ENCODE measurements at regions of chr1 and their contacts with region 1.

Region 1: GRCh38 chr1:40153073-40153770 is 8.0 kb upstream of the RLF start:
- H3K4me3 ChIP-seq: no peak overlapping the region
- H3K27ac ChIP-seq: no peak overlapping the region
- H3K4me1 ChIP-seq: no peaks in the 10 kb centered on the region
- CTCF ChIP-seq: peak; percentile 22; the same call in 1 of the 2 replicates

Region 2: DNA sequence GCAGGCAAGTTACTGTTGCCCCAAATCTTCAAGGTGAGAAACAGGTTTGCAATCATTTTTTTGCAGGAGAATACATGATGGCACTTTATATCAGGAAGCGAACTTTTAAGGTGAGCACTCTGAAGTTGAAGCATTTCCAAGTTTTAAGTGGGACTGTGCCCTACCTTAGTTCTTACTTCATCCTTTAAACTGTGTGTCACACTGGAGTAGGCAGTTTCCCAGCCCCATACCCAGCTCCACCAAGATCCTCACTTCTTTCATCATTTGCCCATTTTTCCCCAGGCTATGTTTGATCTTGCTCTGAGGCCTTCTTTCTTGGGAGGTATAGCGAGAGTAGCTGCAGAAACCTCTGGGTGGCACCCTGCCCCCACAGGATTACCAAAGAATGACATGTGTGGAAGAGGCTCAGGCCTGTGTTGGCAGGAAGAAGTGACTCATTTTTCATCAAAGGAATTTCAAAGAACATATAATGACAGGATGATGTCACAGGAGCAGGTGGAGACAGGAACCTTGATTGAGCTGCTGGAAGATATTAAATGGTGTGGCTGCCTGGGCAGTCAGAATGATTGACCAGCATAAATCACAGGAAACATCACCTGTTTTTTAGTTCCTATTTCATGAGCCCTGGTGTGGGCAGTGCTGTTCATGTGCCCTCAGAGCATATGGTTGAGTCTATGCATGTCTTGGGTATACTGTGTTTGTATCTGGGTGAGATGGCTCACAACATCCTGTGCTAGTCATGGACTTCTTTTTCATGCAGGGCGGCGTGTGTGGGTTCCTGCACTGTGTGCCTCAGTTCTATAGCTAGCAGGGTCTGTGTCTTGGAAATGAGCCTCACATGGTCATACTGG is 969.5 kb before region 1 on chr1:
- CTCF ChIA-PET with region 1: no interaction called
- POLR2A ChIA-PET with region 1: no interaction called
- H3K4me3 ChIP-seq: no peak overlapping the region
- H3K27ac ChIP-seq: peak overlapping the region; percentile 1; the same call in 1 of the 2 replicates
- H3K4me1 ChIP-seq: peaks cover 18% of the 10 kb centered on the region
- CTCF ChIP-seq: peak; percentile 75

Region 3: DNA sequence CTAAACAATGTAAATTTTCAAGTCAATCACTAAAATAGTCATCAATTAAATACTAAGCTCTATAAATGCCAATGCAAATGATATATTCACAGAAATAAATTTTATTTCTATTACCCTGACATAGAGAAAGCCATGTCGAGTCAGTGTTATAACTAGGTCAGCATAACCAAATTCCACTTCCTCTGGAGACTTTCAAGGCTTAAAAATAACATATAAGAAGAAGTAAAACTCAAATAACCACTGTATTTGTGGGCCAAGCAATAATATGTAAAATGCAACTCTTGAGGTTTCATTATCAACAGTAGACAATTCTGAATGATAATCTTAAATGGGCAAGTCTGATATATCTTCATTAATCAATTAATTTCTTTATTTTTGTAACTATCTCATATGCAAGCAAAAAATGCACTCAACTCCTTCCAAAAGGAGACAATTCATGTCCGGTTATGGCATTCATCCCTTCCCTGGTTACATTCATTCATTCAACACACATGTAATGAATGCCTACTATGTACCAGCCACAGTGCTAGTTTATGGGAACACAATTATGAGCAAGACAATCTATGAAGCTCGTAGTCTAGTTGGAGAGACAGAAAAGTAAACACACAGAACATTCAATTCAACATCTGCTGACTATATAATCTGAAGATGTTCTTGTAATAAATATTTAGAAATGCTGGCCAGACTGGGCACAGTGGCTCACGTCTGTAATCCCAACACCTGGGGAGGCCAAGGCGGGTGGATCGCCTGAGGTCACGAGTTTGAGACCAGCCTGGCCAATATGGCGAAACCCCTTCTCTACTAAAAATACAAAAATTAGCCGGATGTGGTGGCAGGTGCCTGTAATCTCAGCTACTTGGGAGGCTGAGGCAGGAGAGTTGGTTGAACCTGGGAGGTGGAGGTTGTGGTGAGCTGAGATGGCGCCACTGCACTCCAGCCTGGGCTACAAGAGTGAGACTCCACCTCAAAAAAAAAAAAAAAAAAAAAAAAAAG is 149.8 kb before region 1 on chr1:
- CTCF ChIA-PET with region 1: no interaction called
- POLR2A ChIA-PET with region 1: no interaction called
- H3K4me3 ChIP-seq: no peak overlapping the region
- H3K27ac ChIP-seq: no peak overlapping the region
- H3K4me1 ChIP-seq: no peaks in the 10 kb centered on the region
- CTCF ChIP-seq: no peak

Region 4: GRCh38 chr1:40078512-40079333 is 74.5 kb before region 1 on chr1:
- CTCF ChIA-PET with region 1: interaction called, 21 read pairs
- POLR2A ChIA-PET with region 1: no interaction called
- H3K4me3 ChIP-seq: no peak overlapping the region
- H3K27ac ChIP-seq: no peak overlapping the region
- H3K4me1 ChIP-seq: no peaks in the 10 kb centered on the region
- CTCF ChIP-seq: peak; percentile 17; the same call in 1 of the 2 replicates

Region 5: GRCh38 chr1:40185951-40186864 is 33.0 kb after region 1 on chr1:
- CTCF ChIA-PET with region 1: interaction called, 49 read pairs
- POLR2A ChIA-PET with region 1: no interaction called
- H3K4me3 ChIP-seq: no peak overlapping the region
- H3K27ac ChIP-seq: no peak overlapping the region
- H3K4me1 ChIP-seq: no peaks in the 10 kb centered on the region
- CTCF ChIP-seq: no peak

Region 6: DNA sequence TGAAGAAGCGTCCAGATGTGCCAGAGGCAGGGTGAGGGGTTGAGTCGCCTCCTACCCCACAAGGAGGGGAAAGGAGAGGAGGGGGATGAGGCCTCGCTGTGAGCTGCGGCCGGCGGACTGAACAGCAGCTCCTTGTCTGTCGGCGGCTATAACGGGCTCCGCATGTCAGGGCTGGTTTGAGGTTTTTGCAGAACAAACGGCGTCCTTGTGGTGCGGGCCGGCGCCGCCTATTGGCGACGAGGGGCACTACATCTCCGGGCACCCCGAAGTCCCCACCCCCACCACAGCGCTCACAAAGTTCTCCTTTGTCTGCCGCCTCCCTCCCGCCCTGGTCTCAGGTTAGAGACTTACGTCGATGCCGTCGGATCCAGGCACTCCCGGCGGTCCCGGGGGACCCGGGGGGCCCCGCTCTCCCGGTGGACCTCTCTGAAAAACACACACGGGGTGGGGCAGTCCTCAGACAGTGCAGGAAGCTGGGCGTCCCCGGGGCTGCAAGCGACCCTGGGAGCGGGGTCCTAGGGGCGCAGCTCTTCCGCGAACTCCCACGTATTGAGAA is 162.1 kb after region 1 on chr1:
- CTCF ChIA-PET with region 1: interaction called, 12 read pairs
- POLR2A ChIA-PET with region 1: no interaction called
- H3K4me3 ChIP-seq: no peak overlapping the region
- H3K27ac ChIP-seq: no peak overlapping the region
- H3K4me1 ChIP-seq: no peaks in the 10 kb centered on the region; the same call in 1 of the 2 replicates
- CTCF ChIP-seq: peak; percentile 58; the same call in 1 of the 2 replicates

Region 7: DNA sequence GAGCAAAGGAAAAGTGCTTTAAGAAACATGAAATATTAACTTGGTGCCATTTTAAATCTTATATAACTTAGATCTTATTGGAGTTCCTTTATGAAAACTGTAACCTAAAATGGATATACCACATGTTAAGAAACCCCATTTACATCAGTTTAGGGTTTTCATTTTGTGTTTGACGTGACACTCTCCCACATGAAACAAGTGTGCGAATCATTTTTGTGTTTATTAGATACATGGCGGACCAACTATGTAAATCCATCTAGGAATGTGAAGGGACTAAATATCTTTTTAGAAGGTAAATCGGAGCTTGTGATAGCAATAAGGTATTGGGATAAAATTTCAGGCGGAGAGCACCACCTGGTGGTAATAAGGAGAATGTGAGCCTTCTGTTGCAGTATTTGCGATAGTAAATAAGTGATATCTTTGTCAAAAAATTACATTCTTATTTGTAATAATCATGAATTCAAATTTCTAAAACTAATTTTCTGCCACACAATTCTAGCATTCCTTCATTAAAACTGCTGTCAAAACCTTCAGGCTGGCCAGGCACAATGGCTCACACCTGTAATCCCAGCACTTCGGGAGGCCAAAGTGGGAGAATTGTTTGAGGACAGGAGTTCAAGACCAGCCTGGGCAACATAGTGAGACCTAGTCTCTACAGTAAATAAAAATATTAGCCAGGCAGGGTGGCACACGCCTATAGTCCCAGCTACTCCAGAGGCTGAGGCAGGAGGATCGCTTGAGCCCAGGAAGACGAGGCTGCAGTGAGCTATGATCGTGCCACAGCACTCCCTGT is 251.6 kb after region 1 on chr1:
- CTCF ChIA-PET with region 1: interaction called, 46 read pairs
- POLR2A ChIA-PET with region 1: no interaction called
- H3K4me3 ChIP-seq: no peak overlapping the region
- H3K27ac ChIP-seq: no peak overlapping the region
- H3K4me1 ChIP-seq: peaks cover 6% of the 10 kb centered on the region; the same call in 1 of the 2 replicates
- CTCF ChIP-seq: peak; percentile 63; the same call in 1 of the 2 replicates